AG04450 (cell line): ENCODE measurements at regions of chr11 and their contacts with region 1.

Region 1: DNA sequence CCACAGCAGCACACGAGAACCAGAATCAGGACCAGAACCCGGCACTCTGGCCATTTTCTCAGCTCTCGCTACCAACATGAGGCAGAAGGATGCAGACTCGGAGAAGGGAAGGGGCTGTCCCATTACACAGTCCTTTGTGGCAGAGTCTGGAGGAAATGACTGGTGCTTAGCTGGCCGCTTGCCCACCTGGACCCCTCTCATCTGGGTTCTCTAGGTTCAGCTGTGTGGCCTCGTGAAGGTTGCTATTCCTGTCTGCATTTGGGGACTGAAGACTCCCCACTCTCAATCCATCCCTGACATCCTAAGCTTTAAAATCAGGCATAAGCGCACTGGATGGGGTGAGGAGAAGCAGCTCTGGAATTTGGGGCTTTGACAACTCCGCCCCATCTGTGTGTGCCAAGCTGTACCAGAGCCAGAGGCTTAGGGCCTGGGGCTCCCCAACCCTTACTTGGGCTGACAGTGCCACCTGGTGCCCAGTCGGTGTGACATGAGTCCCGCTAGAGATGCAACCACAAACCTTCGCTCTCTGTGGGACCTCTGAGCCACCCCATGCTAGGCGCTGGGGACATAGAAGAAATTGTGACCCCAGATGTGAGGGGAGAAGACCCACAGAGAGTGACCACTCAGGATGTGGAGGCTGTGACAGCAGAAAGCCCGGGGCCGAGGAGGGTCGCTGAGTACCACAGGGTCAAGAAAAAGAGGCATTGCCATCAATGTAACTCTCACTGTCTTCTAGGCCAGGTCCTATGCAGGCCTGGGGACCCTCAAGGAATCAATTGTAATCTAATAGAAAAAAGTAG is 35.9 kb upstream of the FCHSD2 start:
- DNase-seq: peak; percentile 60
- H3K4me3 ChIP-seq: no peak overlapping the region
- H3K27ac ChIP-seq: no peak overlapping the region
- H3K27me3 ChIP-seq: peaks cover 9% of the 10 kb centered on the region
- CTCF ChIP-seq: peak; percentile 80

Region 2: GRCh38 chr11:72722050-72722748 is 455.8 kb before region 1 on chr11:
- CTCF ChIA-PET with region 1: interaction called, 12 read pairs
- POLR2A ChIA-PET with region 1: no interaction called
- DNase-seq: peak; percentile 65
- H3K4me3 ChIP-seq: peak overlapping the region; percentile 80
- H3K27ac ChIP-seq: peak overlapping the region; percentile 78
- H3K27me3 ChIP-seq: no peaks in the 10 kb centered on the region
- CTCF ChIP-seq: no peak

Region 3: DNA sequence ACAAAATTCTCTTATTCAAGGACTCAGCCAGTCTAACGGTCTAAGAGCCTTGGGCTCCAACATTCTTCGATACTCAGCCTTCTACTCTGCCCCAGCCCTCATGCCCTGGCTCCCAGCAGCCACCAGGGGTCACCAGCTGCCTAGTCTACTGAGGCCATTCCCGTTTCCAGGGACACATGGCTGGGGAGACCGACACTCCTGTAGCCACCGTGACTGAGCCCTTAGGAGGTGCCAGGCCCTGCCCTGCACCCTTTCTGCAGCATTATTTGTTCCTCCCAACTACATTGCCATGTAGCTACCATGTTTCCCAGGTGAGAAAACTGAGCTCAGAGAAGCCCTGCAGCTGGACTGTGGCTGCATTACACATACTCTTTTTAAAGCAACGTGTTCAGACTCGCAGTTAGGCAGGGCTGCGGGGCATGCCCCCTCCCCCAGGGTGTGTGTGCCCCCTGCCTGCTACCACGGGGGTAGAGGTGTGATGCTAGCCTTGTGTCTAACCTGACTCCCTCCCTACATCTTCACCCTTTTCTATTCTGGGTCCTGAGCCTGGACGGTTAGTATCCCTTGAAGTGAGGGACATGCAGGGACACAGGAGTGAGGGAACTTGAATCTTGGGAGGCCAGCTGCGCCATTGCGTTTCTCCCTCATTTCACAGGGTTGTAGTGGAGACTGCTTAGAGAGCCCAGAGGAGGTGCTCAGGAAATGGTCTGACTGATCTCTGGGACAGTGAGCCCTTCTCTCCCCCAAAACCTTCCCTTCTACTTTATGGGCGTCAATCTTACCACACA is 346.3 kb before region 1 on chr11:
- CTCF ChIA-PET with region 1: interaction called, 153 read pairs
- POLR2A ChIA-PET with region 1: no interaction called
- DNase-seq: no peak
- H3K4me3 ChIP-seq: no peak overlapping the region
- H3K27ac ChIP-seq: no peak overlapping the region
- H3K27me3 ChIP-seq: no peaks in the 10 kb centered on the region
- CTCF ChIP-seq: peak; percentile 98

Region 4: DNA sequence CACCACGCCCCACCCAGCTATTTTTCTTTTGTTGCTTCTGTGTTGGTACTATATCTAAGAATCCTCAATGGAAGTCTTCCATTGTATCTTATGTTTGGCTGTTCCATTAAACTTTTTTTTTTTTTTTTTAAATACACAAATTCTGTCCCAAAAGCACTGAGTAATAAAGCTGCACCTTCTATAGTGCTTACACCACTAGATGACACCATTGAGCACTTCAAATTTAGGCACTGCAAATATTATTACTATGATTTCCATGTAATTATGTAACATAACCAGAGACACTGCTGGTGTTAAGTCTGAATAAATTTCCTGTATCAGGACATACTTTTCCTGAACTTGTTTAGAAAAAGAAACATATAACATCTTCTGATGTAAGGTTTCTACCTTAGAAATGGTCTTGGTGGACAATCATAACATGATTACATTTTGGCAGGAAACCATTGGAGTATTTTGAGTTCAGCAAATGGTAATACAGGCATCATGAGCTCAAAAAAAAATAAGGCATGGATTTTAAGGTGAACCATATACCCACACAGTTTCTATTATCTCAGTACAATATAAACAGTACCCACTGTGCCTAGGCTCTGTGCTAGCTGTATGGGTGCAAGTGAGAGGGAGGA is 253.3 kb before region 1 on chr11:
- CTCF ChIA-PET with region 1: interaction called, 31 read pairs
- POLR2A ChIA-PET with region 1: no interaction called
- DNase-seq: no peak
- H3K4me3 ChIP-seq: no peak overlapping the region
- H3K27ac ChIP-seq: no peak overlapping the region
- H3K27me3 ChIP-seq: no peaks in the 10 kb centered on the region
- CTCF ChIP-seq: peak; percentile 68

Region 5: GRCh38 chr11:73028611-73029010 is 149.4 kb before region 1 on chr11:
- CTCF ChIA-PET with region 1: no interaction called
- POLR2A ChIA-PET with region 1: no interaction called
- DNase-seq: no peak
- H3K4me3 ChIP-seq: no peak overlapping the region
- H3K27ac ChIP-seq: no peak overlapping the region
- H3K27me3 ChIP-seq: no peaks in the 10 kb centered on the region
- CTCF ChIP-seq: no peak

Region 6: GRCh38 chr11:73157053-73158010 is 20.6 kb before region 1 on chr11:
- CTCF ChIA-PET with region 1: interaction called, 11 read pairs
- POLR2A ChIA-PET with region 1: interaction called, 7 read pairs
- DNase-seq: peak; percentile 61
- H3K4me3 ChIP-seq: no peak overlapping the region
- H3K27ac ChIP-seq: peak overlapping the region; percentile 93
- H3K27me3 ChIP-seq: no peaks in the 10 kb centered on the region
- CTCF ChIP-seq: no peak

Region 7: DNA sequence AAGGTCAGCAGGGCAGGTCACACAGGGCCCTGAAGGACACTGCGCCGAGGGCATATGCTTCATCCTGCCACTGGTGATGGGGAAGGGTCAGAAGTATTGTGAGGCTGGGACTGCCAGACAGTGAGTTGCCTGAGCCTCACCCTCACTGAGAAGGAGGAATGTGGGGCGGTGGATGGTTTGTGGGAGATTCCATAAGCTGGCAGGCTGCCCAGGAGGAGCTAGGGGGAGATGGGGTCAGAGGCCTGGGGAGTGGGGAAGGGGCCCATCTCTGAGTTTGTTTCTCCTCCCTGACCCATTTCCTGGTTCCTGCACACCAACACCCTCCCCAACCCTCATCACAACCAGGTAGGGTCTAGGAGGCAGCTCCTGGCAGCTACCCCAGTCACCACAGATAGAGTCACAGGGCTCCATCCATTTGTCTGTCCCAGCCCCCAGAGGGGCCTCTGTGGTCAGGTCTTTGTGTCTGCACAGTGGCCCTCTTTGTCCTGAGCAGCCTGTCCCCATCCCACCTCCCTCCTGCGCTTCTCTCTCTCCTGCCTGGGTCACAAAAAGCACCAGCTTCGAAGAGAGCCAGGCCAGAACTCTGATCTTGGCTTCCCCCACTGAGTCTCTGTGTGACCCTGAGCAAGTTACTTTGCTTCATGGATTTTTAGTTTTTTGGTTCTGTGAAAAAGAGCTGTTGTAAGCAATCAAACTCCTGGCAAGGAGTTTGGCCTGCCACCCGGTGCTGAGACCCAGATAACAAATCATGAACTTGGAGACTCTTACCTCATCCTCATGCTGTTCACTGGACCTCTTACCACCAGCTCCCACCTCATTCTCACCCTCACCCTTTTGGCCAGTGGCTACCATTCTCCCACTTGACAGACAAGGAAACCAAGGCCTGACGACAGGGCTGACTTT is 35.5 kb after region 1 on chr11:
- CTCF ChIA-PET with region 1: no interaction called
- POLR2A ChIA-PET with region 1: no interaction called
- DNase-seq: no peak
- H3K4me3 ChIP-seq: no peak overlapping the region
- H3K27ac ChIP-seq: no peak overlapping the region
- H3K27me3 ChIP-seq: peaks cover 11% of the 10 kb centered on the region
- CTCF ChIP-seq: no peak

Region 8: DNA sequence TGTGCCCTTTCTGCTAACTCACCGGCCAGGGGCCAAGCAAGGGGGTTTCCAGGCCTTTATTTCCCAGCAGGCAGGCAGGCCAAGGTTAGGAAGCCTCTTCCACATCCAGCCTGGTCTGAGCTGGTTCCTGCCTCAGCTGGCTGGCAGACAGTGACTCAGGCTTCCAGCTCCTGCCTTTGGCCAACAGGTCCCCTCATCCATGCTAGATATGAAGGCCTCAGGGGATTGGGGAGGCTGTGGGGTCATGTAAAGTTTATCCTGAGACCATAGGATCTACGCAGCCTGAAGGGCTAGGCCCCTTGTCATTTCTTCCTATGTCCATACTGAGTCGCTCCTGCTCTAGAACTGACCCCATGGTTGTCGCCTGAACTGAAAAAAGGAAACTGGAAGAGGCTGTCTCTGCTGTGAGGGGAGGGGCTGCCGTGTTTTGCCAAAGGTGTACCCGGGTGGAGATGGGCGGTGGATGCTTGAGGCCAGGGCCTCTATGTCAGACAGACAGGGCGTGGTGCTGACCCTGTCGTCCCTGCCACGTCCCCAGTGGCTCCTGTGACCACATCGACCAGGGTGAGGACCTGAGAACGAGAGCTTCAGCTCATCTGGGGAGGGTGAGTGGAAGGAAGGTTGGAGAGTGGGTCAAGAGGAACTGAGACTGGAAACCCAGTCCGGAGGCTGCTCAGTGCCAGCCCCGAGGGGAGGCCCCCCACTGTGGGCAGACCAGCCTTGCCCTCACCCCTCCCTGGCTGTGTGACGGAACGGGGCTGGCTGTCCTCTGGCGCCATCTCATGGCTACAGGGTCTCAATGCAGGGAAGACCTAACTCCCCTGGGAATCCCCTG is 111.1 kb after region 1 on chr11:
- CTCF ChIA-PET with region 1: interaction called, 19 read pairs
- POLR2A ChIA-PET with region 1: no interaction called
- DNase-seq: no peak
- H3K4me3 ChIP-seq: no peak overlapping the region
- H3K27ac ChIP-seq: no peak overlapping the region
- H3K27me3 ChIP-seq: no peaks in the 10 kb centered on the region
- CTCF ChIP-seq: peak; percentile 99